Psoas muscle (tissue), 8 donors: ENCODE measurements at regions of chr15 and their contacts with region 1.

Region 1: DNA sequence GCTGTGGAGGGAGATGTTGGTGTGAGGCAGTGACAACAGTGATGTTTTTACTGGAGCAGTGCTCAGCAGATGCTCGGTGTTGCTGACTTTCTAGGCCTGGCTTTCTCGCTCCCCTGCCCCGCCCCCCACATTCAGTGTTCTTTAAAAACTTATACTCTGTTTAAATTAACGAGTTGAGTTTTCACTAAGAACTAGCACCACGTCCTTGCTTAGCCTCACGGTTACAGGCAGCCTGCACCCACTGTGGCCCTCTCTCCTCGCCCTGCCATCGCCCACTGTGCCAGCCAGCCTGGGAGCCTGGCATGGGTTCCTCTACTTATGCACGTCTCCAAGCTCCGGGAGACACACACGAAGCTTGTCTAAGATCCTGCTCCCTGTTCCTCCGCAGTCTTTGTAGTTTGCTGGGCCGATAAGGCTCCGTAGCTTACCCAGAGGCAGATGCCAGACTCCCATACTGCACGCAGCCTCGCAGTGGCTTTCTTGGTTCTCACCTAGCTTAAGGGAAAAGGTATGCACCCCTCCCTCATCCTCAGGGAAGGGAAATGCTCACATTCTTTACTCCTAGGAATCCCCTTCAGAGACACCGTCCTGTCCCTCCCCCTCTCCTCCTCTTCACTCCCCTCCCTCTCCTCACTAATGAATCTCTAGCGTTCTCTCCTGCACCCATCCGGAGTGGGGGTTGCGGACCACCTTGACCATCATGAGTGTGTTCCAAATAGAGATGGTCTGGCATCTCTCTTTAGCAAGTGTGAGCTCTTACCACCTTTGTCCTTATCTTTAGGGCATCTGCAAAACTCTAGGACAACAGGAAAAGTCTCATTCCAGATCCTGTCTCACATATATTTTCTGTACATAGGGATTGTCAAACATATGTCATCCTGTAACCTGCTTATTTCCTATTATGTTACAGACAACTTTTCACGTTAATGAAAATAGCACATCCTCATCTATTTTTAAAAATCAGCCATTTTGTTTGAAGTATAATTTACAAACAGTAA is 56.4 kb downstream of the TMEM266 start:
- DNase-seq: no peak
- ATAC-seq: no peak
- H3K4me3 ChIP-seq: no peak overlapping the region
- H3K27ac ChIP-seq: no peak overlapping the region
- H3K4me1 ChIP-seq: no peaks in the 10 kb centered on the region
- H3K27me3 ChIP-seq: no peaks in the 10 kb centered on the region
- CTCF ChIP-seq: no peak

Region 2: DNA sequence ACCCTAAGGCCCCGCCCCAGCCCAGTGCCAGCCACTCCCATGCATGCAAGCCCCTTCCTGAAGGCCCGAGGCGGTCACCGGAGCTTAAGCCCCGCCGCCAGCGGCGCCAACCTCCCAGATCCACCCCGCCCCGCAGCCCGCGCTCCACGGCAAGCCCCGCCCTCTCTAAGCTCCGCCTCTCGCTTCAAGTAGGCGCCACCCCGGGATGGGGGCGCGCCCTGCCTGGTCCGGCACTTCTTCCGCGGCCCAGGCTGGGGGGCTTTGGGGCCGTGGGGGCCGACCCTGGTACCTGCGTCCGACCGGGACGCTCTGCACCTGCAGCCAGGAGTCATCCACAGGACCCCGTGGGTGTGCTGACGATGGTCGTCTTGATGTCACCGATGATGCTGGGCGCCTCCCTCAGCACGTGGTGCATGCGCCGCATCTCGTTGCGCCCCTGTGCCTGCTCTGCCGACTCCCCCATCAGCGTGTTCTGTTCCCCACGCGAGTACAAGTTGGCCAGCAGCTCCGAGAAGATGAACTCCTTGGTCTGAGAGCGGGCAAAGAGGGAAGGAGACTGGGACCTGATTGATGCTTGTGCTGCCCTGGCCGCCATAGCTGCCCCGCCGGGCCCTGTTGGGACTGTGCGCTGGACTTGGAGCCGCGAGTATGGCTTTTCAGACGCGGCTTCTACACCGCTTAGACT is 377.4 kb before region 1 on chr15:
- intact Hi-C with region 1: no loop called
- DNase-seq: peak; percentile 94 to 96
- ATAC-seq: peak; percentile 97 to 99 (median 98)
- H3K4me3 ChIP-seq: peak overlapping the region; percentile 79
- H3K27ac ChIP-seq: no peak overlapping the region
- H3K4me1 ChIP-seq: no peaks in the 10 kb centered on the region
- H3K27me3 ChIP-seq: no peaks in the 10 kb centered on the region
- CTCF ChIP-seq: no peak

Region 3: DNA sequence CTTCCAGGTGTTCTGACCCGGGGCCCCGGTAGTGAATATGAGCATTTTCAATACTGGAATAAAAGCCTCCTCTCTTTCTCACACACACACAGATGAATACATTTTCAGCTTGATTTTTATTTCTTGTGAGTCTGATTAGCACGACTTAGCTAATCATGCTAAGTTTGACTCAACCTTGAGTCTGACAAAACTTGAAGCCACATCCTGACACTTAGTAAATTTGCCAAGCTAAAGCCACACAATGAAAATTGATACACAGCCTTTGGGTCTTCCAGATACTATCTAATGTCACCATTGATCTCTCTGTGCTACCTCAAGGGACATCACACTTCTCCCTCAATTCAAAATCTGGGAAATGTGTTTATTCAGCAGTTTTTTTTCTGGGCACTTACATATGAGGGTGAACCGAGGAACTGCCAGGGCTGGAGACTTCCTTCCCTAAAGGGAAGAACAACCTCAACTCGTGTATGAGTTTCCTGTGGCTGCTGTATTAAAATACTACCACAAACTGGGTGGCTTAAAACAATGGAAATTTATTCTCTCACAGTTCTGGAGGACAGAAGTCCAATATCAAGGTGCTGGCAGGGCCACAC is 37.8 kb before region 1 on chr15:
- intact Hi-C with region 1: loop called in 1 of 2 experiments (anchors 1 kb)
- DNase-seq: no peak
- ATAC-seq: no peak
- H3K4me3 ChIP-seq: no peak overlapping the region
- H3K27ac ChIP-seq: peak overlapping the region; percentile 43
- H3K4me1 ChIP-seq: peaks cover 14% of the 10 kb centered on the region
- H3K27me3 ChIP-seq: no peaks in the 10 kb centered on the region
- CTCF ChIP-seq: no peak